Activated CD4-positive, alpha-beta T cell treated with anti-CD3 and anti-CD28 coated beads for 36 hours (primary cell): ENCODE measurements at regions of chr5 and their contacts with region 1.

Region 1: GRCh38 chr5:150000256-150000989 is at the starts of genes HMGXB3 and TIGD6:
- DNase-seq: peak; percentile 93
- ATAC-seq: peak; percentile 80
- H3K4me3 Mint-ChIP-seq: peak within 1 kb of the TSS; percentile 86
- H3K27ac Mint-ChIP-seq: peak within 1 kb of the TSS; percentile 94
- H3K4me1 Mint-ChIP-seq: peaks cover 37% of the 10 kb centered on the region
- H3K27me3 Mint-ChIP-seq: no peaks in the 10 kb centered on the region
- total RNA-seq, gene HMGXB3: 27.2 to 30.5 TPM
- total RNA-seq, gene TIGD6: 2.5 to 2.6 TPM

Region 2: GRCh38 chr5:148383564-148384379 is 1616.7 kb before region 1 on chr5 and contains the start of gene FBXO38:
- CTCF ChIA-PET with region 1: no interaction called
- POLR2A ChIA-PET with region 1: no interaction called
- intact Hi-C with region 1: loop called in 1 of 2 experiments (anchors 2 kb)
- DNase-seq: peak; percentile 98
- ATAC-seq: peak; percentile 97
- H3K4me3 Mint-ChIP-seq: peak within 1 kb of the TSS; percentile 94
- H3K27ac Mint-ChIP-seq: peak within 1 kb of the TSS; percentile 99
- H3K4me1 Mint-ChIP-seq: peaks cover 56% of the 10 kb centered on the region
- H3K27me3 Mint-ChIP-seq: no peaks in the 10 kb centered on the region
- total RNA-seq, gene FBXO38: 47.5 to 65.4 TPM

Region 3: GRCh38 chr5:149551200-149552037 is 449.0 kb before region 1 on chr5 and contains the start of gene CSNK1A1:
- CTCF ChIA-PET with region 1: no interaction called
- POLR2A ChIA-PET with region 1: no interaction called
- intact Hi-C with region 1: loop called in 1 of 2 experiments (anchors 1 kb)
- DNase-seq: peak; percentile 100
- ATAC-seq: peak; percentile 90
- H3K4me3 Mint-ChIP-seq: peak within 1 kb of the TSS; percentile 95
- H3K27ac Mint-ChIP-seq: peak within 1 kb of the TSS; percentile 100
- H3K4me1 Mint-ChIP-seq: peaks cover 27% of the 10 kb centered on the region
- H3K27me3 Mint-ChIP-seq: no peaks in the 10 kb centered on the region
- total RNA-seq, gene CSNK1A1: 169 to 203 TPM

Region 4: GRCh38 chr5:150122158-150122510 is 121.7 kb after region 1 on chr5:
- CTCF ChIA-PET with region 1: interaction called, 4 read pairs
- POLR2A ChIA-PET with region 1: no interaction called
- intact Hi-C with region 1: loop called in 1 of 2 experiments (anchors 5 kb)
- DNase-seq: peak; percentile 68
- ATAC-seq: peak; percentile 93
- H3K4me3 Mint-ChIP-seq: no peak overlapping the region
- H3K27ac Mint-ChIP-seq: no peak overlapping the region
- H3K4me1 Mint-ChIP-seq: no peaks in the 10 kb centered on the region
- H3K27me3 Mint-ChIP-seq: no peaks in the 10 kb centered on the region

Region 5: DNA sequence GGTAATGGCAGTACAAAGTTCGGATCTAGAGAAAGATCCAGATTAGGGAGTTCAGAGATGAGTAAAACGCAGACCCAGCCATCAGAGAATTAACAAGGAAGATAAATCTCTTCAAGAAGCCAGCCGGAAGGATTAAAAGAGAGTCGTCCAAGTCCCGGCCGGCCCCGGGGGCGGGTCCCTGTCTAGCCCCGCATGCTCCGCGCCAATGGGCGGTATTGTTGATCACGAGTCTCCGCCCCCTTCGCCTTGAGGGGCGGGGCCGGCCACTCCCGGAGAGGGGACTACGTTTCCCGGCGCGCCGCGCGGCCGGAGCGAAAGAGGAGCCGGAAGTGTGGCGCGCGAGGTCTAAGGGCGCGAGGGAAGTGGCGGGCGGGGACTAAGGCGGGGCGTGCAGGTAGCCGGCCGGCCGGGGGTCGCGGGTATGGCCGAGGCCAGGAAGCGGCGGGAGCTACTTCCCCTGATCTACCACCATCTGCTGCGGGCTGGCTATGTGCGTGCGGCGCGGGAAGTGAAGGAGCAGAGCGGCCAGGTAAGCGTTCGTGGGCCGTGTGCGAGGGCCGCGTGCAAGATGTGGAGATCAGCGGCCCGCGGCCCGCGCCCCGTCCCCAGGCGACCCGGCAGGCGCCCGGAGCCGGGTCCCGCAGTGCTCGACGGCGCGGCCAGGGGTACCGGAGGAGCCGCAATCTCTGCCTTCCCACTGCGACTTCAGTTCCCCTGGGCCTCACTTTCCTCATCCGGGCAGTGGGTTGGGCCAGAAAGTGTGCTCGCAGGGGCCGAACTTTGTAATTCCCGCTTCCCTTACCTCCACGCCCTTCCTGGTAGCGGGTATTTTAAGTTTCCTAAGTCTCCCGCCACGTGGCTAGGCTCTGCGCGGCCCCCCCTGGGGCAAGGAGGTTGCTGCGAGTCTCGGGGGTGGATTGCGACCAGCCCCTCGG is 357.2 kb after region 1 on chr5 and contains the start of gene TCOF1:
- CTCF ChIA-PET with region 1: no interaction called
- POLR2A ChIA-PET with region 1: no interaction called
- intact Hi-C with region 1: loop called (anchors 1 to 5 kb)
- DNase-seq: peak; percentile 99
- ATAC-seq: peak; percentile 99
- H3K4me3 Mint-ChIP-seq: peak within 1 kb of the TSS; percentile 87
- H3K27ac Mint-ChIP-seq: peak within 1 kb of the TSS; percentile 90
- H3K4me1 Mint-ChIP-seq: peaks cover 43% of the 10 kb centered on the region
- H3K27me3 Mint-ChIP-seq: no peaks in the 10 kb centered on the region
- total RNA-seq, gene TCOF1: 113 to 145 TPM

Region 6: GRCh38 chr5:150449517-150450339 is 449.3 kb after region 1 on chr5 and contains the start of gene RPS14:
- CTCF ChIA-PET with region 1: no interaction called
- POLR2A ChIA-PET with region 1: no interaction called
- intact Hi-C with region 1: loop called in 1 of 2 experiments (anchors 1 kb)
- DNase-seq: peak; percentile 96
- ATAC-seq: peak; percentile 93
- H3K4me3 Mint-ChIP-seq: peak within 1 kb of the TSS; percentile 95
- H3K27ac Mint-ChIP-seq: peak within 1 kb of the TSS; percentile 99
- H3K4me1 Mint-ChIP-seq: peaks cover 31% of the 10 kb centered on the region
- H3K27me3 Mint-ChIP-seq: no peaks in the 10 kb centered on the region
- total RNA-seq, gene RPS14: 2,270 to 3,312 TPM